Activated CD8-positive, alpha-beta T cell treated with anti-CD3 and anti-CD28 coated beads for 36 hours (primary cell): ENCODE measurements at regions of chrX and their contacts with region 1.

Region 1: DNA sequence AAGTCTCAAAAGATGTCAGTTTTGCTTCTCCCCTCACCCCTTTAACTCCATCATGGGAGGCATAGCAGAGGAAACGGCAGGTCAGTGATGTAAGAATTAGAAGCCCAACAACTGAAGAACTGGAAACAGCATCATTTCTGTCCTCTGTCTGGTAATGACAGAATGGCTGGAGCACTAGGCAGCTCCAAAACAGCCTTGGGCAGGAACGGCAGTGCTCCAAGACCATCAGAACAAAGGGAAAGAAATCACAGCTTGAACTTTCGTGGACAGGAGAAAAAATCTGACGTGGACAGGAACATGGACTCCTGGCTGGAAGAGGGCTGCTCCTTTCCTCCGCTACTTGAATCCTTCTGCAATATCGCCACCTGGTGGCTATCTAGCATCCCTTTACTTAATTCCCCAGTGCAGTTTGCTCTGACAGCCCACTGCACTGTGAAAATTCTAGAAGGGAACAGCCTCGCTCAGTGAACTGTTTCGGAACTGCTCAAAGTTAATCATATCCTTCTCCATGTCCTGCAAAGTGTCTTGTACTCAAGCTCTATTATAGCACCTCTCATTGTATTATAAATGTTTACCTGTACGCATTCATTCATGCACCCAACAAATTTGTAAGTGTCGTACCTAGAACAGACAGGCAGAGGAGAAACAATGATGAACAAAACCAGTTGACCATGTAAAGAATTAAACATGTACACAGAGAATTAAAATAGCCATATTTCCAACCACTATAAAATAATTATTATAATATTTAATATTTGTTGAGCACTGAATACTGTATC is 20.4 kb downstream of the SLC25A53 start:
- DNase-seq: peak; percentile 65
- ATAC-seq: peak; percentile 63
- H3K4me3 Mint-ChIP-seq: no peak overlapping the region
- H3K27ac Mint-ChIP-seq: no peak overlapping the region
- H3K4me1 Mint-ChIP-seq: peaks cover 27% of the 10 kb centered on the region
- H3K27me3 Mint-ChIP-seq: no peaks in the 10 kb centered on the region
- CTCF ChIP-seq: peak; percentile 61

Region 2: GRCh38 chrX:103742339-103742738 is 394.1 kb before region 1 on chrX:
- CTCF ChIA-PET with region 1: no interaction called
- POLR2A ChIA-PET with region 1: no interaction called
- intact Hi-C with region 1: no loop called
- DNase-seq: no peak
- ATAC-seq: no peak
- H3K4me3 Mint-ChIP-seq: no peak overlapping the region
- H3K27ac Mint-ChIP-seq: no peak overlapping the region
- H3K4me1 Mint-ChIP-seq: no peaks in the 10 kb centered on the region
- H3K27me3 Mint-ChIP-seq: no peaks in the 10 kb centered on the region
- CTCF ChIP-seq: no peak

Region 3: DNA sequence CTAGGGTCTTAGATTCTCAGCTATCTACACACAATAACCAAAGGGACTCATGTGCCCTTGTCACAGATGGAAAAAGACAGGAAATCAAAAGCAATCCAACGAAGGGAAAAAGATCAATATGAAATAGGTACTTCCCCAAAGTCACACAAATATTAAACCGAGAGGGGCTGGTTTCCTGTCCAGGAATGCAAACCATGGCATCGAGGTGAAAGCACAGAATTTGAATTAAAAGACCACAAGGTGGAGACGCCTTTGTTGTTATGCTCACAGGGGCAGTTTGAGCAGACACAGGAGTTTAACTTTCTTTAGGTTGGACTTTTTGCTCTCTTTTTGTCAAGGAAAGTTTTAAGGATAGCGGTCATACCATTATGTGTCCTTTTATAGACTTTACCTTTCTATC is 137.2 kb before region 1 on chrX:
- CTCF ChIA-PET with region 1: no interaction called
- POLR2A ChIA-PET with region 1: no interaction called
- intact Hi-C with region 1: no loop called
- DNase-seq: no peak
- ATAC-seq: no peak
- H3K4me3 Mint-ChIP-seq: no peak overlapping the region
- H3K27ac Mint-ChIP-seq: no peak overlapping the region
- H3K4me1 Mint-ChIP-seq: no peaks in the 10 kb centered on the region
- H3K27me3 Mint-ChIP-seq: no peaks in the 10 kb centered on the region
- CTCF ChIP-seq: no peak

Region 4: DNA sequence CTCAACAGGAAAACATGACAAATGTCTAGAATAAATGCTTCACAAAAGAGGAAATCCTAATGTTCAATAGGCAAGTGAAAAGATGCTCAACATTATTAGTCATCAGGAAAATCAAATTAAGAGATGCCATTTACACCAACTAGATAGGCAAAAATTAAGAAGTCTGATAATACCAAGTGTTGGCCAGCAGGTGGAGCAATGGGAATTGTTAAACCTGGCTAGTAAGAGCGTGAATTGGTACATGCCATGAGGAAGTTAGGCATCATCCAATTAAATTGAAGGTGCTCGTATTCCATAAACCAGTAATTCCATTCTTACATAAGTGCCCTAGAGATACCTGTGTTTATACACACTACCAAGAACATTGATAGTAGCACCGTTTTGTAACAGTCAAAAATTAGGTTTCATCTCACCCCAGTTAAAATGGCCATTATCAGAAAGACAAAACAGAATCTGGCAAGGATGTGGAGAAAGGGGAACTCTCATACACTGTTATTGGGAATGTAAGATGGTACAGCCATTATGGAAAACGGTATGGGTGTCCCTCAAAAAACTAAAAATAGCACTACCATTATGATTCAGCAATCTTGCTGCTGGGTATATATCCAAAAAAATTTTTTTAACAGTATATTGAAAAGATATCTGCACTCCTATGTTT is 38.1 kb before region 1 on chrX:
- CTCF ChIA-PET with region 1: interaction called, 50 read pairs
- POLR2A ChIA-PET with region 1: no interaction called
- intact Hi-C with region 1: loop called (anchors 1 kb)
- DNase-seq: peak; percentile 61
- ATAC-seq: peak; percentile 60
- H3K4me3 Mint-ChIP-seq: no peak overlapping the region
- H3K27ac Mint-ChIP-seq: no peak overlapping the region
- H3K4me1 Mint-ChIP-seq: peaks cover 6% of the 10 kb centered on the region
- H3K27me3 Mint-ChIP-seq: no peaks in the 10 kb centered on the region
- CTCF ChIP-seq: peak; percentile 59

Region 5: DNA sequence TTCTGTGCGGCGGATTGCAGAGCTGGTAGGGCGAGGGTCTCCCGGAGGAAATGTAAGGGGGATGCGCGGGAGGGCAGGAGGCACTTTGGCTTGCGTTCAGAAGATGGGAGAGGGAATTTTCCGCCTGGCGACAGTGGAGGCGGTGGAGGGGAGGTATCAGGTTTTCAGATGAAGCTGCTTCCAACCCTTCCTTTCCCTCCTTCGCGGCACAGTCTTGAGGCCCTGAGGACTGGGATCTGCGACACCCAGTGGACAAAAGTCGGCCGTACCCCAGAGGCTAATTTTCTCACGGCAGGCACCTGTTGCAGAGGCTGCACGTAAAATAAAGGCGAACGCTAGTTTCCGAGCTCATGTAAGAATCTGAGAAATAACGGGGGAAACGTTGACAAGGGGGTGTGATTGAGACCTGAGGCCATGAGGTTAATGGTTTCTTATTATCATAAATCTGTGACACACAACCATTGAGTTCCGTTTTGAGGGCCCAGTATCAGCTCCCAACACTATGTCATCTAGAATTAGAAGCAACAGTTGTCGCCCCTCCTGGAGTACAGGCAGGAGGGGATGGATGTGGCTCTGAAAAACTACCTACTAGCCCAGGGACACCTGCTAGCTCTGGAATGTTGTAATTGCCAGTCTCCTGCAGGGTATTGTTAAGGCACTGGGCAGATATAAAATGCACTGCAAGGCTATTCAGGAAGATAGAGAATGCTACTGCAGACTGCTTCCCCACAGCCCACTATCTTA is 23.0 kb before region 1 on chrX:
- CTCF ChIA-PET with region 1: interaction called, 35 read pairs
- POLR2A ChIA-PET with region 1: no interaction called
- intact Hi-C with region 1: no loop called
- DNase-seq: peak; percentile 71
- ATAC-seq: peak; percentile 57
- H3K4me3 Mint-ChIP-seq: peak overlapping the region; percentile 81
- H3K27ac Mint-ChIP-seq: peak overlapping the region; percentile 89
- H3K4me1 Mint-ChIP-seq: peaks cover 57% of the 10 kb centered on the region
- H3K27me3 Mint-ChIP-seq: no peaks in the 10 kb centered on the region
- CTCF ChIP-seq: peak; percentile 27

Region 6: DNA sequence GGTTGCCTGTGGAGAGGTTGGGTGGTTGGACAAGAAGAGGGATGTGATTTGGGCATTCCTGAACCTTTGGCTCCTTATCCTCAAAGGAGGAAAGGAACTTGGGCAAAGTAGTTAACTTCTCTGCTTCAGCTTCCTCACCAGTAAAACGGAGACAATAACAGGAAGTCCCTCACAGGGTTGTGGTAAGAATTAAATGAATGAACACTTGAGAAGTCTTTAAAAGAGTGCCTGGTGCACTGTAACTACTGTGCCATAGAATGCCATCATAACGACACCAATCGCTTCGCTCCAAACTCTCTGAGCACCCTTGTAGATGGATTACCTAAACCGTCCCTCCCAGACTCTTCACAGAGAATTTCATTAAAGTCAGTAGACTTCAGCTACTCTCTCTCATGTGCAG is 13.6 kb before region 1 on chrX:
- CTCF ChIA-PET with region 1: interaction called, 12 read pairs
- POLR2A ChIA-PET with region 1: no interaction called
- intact Hi-C with region 1: no loop called
- DNase-seq: peak; percentile 19
- ATAC-seq: peak; percentile 91
- H3K4me3 Mint-ChIP-seq: no peak overlapping the region
- H3K27ac Mint-ChIP-seq: peak overlapping the region; percentile 84
- H3K4me1 Mint-ChIP-seq: peaks cover 51% of the 10 kb centered on the region
- H3K27me3 Mint-ChIP-seq: no peaks in the 10 kb centered on the region
- CTCF ChIP-seq: no peak

Region 7: GRCh38 chrX:104151037-104151436 is 14.6 kb after region 1 on chrX:
- CTCF ChIA-PET with region 1: interaction called, 10 read pairs
- POLR2A ChIA-PET with region 1: interaction called, 4 read pairs
- intact Hi-C with region 1: no loop called
- DNase-seq: no peak
- ATAC-seq: no peak
- H3K4me3 Mint-ChIP-seq: no peak overlapping the region
- H3K27ac Mint-ChIP-seq: no peak overlapping the region
- H3K4me1 Mint-ChIP-seq: peaks cover 12% of the 10 kb centered on the region
- H3K27me3 Mint-ChIP-seq: no peaks in the 10 kb centered on the region
- CTCF ChIP-seq: no peak

Region 8: GRCh38 chrX:104172121-104172520 is 35.7 kb after region 1 on chrX:
- CTCF ChIA-PET with region 1: no interaction called
- POLR2A ChIA-PET with region 1: no interaction called
- intact Hi-C with region 1: no loop called
- DNase-seq: no peak
- ATAC-seq: no peak
- H3K4me3 Mint-ChIP-seq: no peak overlapping the region
- H3K27ac Mint-ChIP-seq: no peak overlapping the region
- H3K4me1 Mint-ChIP-seq: peaks cover 29% of the 10 kb centered on the region
- H3K27me3 Mint-ChIP-seq: no peaks in the 10 kb centered on the region
- CTCF ChIP-seq: no peak